Posterior vena cava (tissue), 2 donors: ENCODE measurements at regions of chr1 and their contacts with region 1.

Region 1: DNA sequence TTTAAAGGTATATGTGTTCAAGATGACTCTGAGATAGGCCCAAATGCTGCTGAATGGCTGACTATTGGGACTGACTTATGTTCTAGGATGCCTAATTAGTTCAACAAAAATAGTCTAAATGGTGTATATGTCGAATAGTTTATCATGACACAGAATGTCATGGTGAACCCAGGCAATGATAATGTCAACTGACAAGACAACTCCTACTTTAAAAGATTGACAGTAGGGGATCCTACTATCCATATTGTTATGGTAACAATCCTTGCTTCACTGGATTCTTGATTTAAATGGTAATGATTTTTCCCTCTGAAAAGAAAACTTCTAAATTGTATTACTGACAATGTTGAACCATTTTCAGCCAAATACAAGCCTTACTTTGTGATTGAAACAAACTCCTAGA is 279.7 kb downstream of the NTNG1 start:
- DNase-seq: no peak

Region 2: GRCh38 chr1:107286125-107286524 is 134.4 kb before region 1 on chr1:
- intact Hi-C with region 1: loop called in 1 of 2 experiments (anchors 10 kb)
- DNase-seq: no peak